ENCODE measurements at regions of chr9 and their contacts with region 1.

Region 1: DNA sequence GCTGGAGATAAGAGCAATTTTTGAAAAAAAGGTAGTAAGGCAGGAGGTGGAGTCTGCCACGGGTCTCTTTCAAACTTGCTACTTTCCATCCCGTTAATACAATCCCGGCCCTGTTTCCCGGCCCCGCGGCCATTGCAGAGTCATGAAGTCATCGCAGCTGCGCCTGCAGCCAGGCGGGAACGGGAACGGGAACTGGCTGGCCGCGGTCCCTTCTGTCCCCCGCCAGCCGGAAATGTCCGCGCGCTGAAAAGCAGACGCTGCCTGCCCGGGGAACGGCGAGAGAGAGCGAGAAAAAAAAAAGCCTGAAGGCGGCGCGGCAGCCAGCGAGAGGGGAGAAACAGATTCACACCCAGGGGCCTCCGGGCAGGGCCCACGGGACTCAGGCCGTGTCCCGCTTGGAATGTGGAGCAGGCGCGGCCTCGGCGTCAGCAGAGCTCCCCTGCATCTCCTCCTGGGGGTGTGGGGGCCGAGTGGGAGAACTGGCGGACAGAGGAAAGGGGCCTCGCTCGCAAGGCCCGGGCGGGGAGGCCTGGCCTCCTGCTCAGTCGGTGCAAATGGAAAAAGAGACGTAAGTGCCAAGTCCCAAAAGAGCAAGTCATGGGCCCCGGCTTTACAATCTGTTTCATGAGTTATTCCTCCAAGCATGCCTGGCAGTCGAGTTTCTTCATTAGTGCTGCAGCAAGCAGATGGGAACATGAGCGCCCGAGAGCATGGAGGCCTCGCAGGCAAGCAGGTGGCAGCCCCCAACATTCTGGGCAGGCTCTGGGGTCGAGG is 201.2 kb upstream of the GAS1 start:
- DNase-seq: peak; percentile 72 to 90 (median 85)
- H3K4me3 ChIP-seq: peak overlapping the region; percentile 8 to 73 (median 57)
- H3K27ac ChIP-seq: peak overlapping the region; percentile 54 to 99 (median 94)
- H3K27me3 ChIP-seq: no peaks in the 10 kb centered on the region
- CTCF ChIP-seq: peak in 49 of 56 donors; percentile 12 to 71 (median 38)

Region 2: GRCh38 chr9:86997158-86997557 is 151.4 kb before region 1 on chr9:
- intact Hi-C with region 1: no loop called
- DNase-seq: no peak
- H3K4me3 ChIP-seq: no peak overlapping the region
- H3K27ac ChIP-seq: no peak overlapping the region
- H3K27me3 ChIP-seq: no peaks in the 10 kb centered on the region
- CTCF ChIP-seq: no peak

Region 3: DNA sequence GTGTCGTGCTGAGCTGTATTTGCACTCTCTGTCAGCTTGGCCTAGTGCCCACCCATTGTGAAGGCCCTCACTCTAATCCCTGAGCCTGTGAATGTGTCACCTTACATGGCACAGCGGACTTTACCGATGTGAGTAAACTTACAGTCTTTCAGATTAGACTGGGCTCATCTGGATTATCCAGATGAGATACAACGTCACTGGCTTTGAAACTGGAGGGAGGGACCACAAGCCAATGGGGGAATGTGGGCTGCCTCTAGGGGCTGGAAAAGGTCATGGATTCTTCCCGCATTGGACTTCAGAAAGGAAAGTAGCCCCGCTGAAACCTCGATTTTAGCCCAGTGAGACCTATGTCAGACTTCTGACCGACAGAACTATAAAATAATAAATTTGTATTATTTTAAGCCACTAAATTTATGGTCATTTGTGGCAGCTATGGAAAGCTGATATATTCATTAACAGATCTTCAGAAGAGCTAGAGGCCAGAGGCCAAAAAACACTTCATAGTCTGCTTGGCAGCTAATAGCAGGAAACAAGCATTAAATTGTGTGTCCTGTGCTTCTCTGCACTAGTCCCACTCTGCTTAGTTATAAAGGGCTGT is 62.2 kb before region 1 on chr9:
- intact Hi-C with region 1: loop called in 1 of 2 experiments (anchors 5 kb)
- DNase-seq: no peak
- H3K4me3 ChIP-seq: no peak overlapping the region
- H3K27ac ChIP-seq: no peak overlapping the region
- H3K27me3 ChIP-seq: no peaks in the 10 kb centered on the region
- CTCF ChIP-seq: no peak

Region 4: DNA sequence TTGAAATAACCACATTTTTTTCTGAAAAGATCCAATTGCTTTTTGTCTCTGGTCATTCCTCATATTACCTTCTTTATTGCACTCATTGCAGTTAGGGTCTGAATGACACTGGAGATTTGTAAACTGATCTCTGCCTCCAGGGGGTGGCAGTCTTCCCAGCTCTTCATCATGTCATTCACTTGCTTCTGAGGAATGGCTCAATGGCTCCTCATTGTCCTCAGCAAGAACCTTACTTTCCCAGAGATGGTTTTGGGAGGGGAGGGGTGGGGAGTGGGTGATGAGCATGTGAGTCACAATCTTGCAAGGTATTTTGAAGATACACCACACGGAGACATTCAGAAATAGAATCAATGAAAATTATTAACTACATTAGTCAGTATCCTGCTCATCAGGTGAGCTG is 41.4 kb before region 1 on chr9:
- intact Hi-C with region 1: loop called in 1 of 2 experiments (anchors 5 kb)
- DNase-seq: peak in 2 of 10 donors; percentile 14 to 38
- H3K4me3 ChIP-seq: no peak overlapping the region
- H3K27ac ChIP-seq: no peak overlapping the region
- H3K27me3 ChIP-seq: no peaks in the 10 kb centered on the region
- CTCF ChIP-seq: peak in 44 of 56 donors; percentile 11 to 63 (median 34)

Region 5: DNA sequence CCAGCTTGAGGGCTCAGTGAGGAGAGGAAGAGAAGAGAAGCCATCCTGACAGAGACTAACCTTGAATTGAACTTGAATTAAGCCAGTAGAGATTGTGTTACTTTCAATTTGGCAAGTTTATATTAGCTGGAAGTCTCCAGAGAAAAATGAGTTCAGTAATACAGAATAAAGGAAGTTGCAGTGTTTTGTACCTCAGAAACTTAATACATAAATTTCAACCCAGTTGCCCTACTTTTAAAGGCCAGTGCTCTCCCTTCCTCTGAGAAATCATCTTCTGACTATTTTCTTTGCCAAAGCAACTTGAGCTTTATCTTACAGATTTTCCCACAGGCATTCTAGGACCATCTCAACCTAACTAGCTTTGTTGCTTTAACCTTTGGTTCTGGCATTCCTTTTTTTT is 29.8 kb after region 1 on chr9:
- intact Hi-C with region 1: no loop called
- DNase-seq: no peak
- H3K4me3 ChIP-seq: no peak overlapping the region
- H3K27ac ChIP-seq: no peak overlapping the region
- H3K27me3 ChIP-seq: no peaks in the 10 kb centered on the region
- CTCF ChIP-seq: no peak

Region 6: GRCh38 chr9:87238545-87238944 is 90.0 kb after region 1 on chr9:
- intact Hi-C with region 1: loop called in 1 of 2 experiments (anchors 5 kb)
- DNase-seq: no peak
- H3K4me3 ChIP-seq: peak overlapping the region in 45 of 59 donors; percentile 2 to 58 (median 29)
- H3K27ac ChIP-seq: peak overlapping the region in 8 of 59 donors; percentile 5 to 66 (median 44)
- H3K27me3 ChIP-seq: no peaks in the 10 kb centered on the region
- CTCF ChIP-seq: no peak